ENCODE measurements at regions of chr2 and their contacts with region 1.

Region 1: GRCh38 chr2:201551901-201552300 is 91.4 kb downstream of the TMEM237 start:
- DNase-seq: no peak
- H3K4me3 Mint-ChIP-seq: no peak overlapping the region
- H3K27ac Mint-ChIP-seq: no peak overlapping the region
- H3K4me1 Mint-ChIP-seq: no peaks in the 10 kb centered on the region
- H3K27me3 Mint-ChIP-seq: no peaks in the 10 kb centered on the region

Region 2: GRCh38 chr2:201420442-201421113 is 131.3 kb before region 1 on chr2:
- intact Hi-C with region 1: no loop called
- DNase-seq: no peak
- H3K4me3 Mint-ChIP-seq: no peak overlapping the region
- H3K27ac Mint-ChIP-seq: no peak overlapping the region
- H3K4me1 Mint-ChIP-seq: peaks cover 22% of the 10 kb centered on the region
- H3K27me3 Mint-ChIP-seq: no peaks in the 10 kb centered on the region

Region 3: DNA sequence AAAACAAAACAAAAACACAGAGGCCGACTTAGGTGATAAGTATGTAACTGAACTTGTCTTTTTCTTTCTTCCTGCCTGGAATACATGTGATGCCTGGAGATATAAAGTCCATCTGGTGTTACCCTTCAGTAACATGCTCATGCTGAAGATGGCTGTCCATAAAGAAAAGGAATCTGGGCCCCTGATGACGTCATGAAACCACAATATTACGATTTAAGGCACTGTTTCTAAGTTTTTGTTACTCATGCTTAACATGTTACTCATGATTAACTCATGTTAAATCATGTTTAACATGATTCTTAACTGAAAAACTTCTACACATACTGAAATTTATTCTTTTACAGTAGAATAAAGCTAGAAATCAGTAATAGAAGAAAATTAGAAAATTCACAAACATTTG is 51.4 kb before region 1 on chr2:
- intact Hi-C with region 1: loop called (anchors 1 kb)
- DNase-seq: no peak
- H3K4me3 Mint-ChIP-seq: no peak overlapping the region
- H3K27ac Mint-ChIP-seq: no peak overlapping the region
- H3K4me1 Mint-ChIP-seq: no peaks in the 10 kb centered on the region
- H3K27me3 Mint-ChIP-seq: peaks cover 2% of the 10 kb centered on the region